MCF 10A (cell line): ENCODE measurements at regions of chr5 and their contacts with region 1.

Region 1: DNA sequence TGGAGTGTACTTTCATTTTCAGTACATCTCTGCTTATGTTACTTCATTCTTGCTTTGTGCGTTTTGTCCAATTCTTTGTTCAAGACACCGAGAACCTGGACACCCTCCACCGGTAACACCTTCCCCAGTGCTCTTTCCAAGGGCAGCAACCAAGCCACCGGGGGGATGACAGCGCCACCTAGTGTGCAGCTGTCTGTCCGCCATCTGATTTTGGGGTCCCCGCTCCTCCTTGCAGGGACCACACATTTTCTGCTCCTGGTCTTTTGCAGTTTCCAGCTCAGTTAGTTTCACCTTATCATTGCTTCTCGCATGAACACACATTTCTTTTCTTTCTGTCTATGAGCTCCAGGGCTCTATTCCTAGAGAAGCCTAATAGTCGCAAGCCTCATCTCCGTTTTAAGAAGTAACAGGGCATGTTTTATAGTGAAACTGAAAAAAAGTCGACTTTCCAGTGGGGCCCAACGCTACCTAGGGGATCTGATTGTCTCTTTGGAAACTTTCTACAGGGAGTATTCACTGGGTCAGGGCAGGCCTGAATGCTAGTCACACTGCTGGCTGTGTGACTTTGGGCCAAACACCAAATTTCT is 152.1 kb downstream of the FSTL4 start:
- DNase-seq: peak; percentile 62
- H3K4me3 Mint-ChIP-seq: no peak overlapping the region
- H3K27ac Mint-ChIP-seq: no peak overlapping the region
- H3K4me1 Mint-ChIP-seq: peaks cover 21% of the 10 kb centered on the region
- H3K27me3 Mint-ChIP-seq: no peaks in the 10 kb centered on the region
- CTCF ChIP-seq: peak; percentile 95

Region 2: DNA sequence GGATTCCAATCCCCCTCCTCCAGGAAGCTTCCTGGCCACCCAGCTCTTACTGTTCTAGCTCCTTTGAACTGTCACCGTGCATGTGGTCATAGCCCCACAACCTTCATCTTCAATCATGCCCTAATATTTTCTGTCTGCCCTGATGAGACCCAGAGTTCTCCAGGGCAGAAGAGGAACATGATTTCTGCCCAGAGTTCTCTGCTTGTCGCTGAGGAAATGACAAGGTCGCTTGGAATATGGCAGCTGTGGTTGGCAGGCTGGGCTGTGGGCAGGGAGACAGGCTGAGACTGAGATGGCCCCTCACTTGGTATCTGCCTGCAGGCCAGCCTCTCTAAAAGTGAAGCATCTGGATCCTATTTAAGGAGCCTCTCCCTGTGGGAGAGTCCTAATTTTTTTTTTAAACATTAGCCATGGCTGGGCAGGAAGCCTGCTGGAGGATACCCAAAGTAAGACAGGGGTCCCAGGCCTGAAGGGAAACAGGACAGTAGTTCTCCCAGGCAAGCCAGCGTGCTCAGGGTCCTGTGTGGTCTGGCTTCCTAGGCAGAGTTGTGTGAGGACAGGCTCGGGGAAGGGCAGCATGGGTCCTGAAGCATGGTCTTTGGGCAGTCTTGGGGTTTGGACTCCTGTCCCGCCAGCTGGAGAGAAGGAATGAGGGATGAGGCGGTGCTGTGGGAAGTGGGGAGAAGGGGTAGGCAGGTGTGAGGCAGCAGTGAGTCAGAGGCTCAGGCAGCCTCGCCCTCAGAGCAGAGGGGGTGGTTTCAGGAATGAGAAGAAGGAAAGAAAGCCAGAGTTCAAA is 90.0 kb before region 1 on chr5:
- CTCF ChIA-PET with region 1: no interaction called
- POLR2A ChIA-PET with region 1: no interaction called
- intact Hi-C with region 1: loop called (anchors 5 kb)
- DNase-seq: peak; percentile 68
- H3K4me3 Mint-ChIP-seq: no peak overlapping the region
- H3K27ac Mint-ChIP-seq: peak overlapping the region; percentile 20
- H3K4me1 Mint-ChIP-seq: peaks cover 17% of the 10 kb centered on the region
- H3K27me3 Mint-ChIP-seq: peaks cover 9% of the 10 kb centered on the region
- CTCF ChIP-seq: no peak

Region 3: DNA sequence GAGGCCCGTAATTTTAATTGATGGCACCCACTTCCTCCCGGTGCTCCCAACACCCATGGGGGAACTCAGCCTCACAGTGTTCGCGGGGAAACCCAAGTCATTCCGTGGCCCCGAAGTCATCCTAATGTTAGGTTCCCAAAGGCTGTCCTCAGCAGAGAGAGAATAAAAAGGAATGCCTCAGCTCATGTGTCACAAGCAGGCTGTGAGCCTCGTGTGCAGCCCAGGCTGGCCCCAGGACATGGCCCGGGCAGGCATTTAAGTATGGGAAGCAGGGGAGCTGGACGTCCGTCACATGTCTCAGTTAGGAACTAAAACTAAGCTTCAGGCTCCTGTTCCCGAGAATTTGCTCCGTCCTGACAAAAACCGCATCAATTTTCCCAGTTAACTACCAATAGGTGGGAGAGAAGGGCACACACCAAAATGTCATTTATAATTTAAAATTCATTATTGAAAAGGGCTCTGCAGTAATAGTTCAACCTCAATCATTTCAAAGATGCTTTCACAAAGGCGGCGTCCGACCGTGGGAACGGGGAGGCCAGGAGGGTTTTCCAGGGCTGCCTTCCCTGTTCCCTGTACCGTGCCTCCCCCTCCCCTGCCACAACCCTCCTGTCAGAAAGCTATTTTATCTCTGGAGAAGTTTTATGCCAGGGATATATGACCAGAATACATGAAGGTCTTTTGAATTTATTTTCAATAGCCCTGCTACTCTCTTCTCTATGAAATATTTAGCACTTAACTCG is 14.8 kb after region 1 on chr5:
- CTCF ChIA-PET with region 1: interaction called, 15 read pairs
- POLR2A ChIA-PET with region 1: no interaction called
- intact Hi-C with region 1: no loop called
- DNase-seq: no peak
- H3K4me3 Mint-ChIP-seq: no peak overlapping the region
- H3K27ac Mint-ChIP-seq: no peak overlapping the region
- H3K4me1 Mint-ChIP-seq: peaks cover 5% of the 10 kb centered on the region
- H3K27me3 Mint-ChIP-seq: peaks cover 47% of the 10 kb centered on the region
- CTCF ChIP-seq: no peak

Region 4: GRCh38 chr5:133499895-133500294 is 39.6 kb after region 1 on chr5:
- CTCF ChIA-PET with region 1: no interaction called
- POLR2A ChIA-PET with region 1: no interaction called
- intact Hi-C with region 1: no loop called
- DNase-seq: no peak
- H3K4me3 Mint-ChIP-seq: no peak overlapping the region
- H3K27ac Mint-ChIP-seq: no peak overlapping the region
- H3K4me1 Mint-ChIP-seq: no peaks in the 10 kb centered on the region
- H3K27me3 Mint-ChIP-seq: peaks cover 78% of the 10 kb centered on the region
- CTCF ChIP-seq: no peak